ENCODE measurements at regions of chr11 and their contacts with region 1.

Region 1: GRCh38 chr11:75513250-75513649 is 12.5 kb downstream of the GDPD5 start:
- DNase-seq: no peak
- H3K4me3 ChIP-seq: no peak overlapping the region
- H3K27ac ChIP-seq: no peak overlapping the region
- H3K4me1 ChIP-seq: peaks cover 0 to 13% (median 0%) of the 10 kb centered on the region in 4 donors
- H3K27me3 ChIP-seq: no peaks in the 10 kb centered on the region
- CTCF ChIP-seq: no peak
- EP300 ChIP-seq: no peak
- POLR2A ChIP-seq: no peak

Region 2: GRCh38 chr11:75468534-75469340 is 44.5 kb before region 1 on chr11:
- intact Hi-C with region 1: loop called (anchors 5 kb)
- DNase-seq: peak; percentile 87
- H3K4me3 ChIP-seq: no peak overlapping the region
- H3K27ac ChIP-seq: peak overlapping the region in 2 of 4 donors; percentile 14
- H3K4me1 ChIP-seq: no peaks in the 10 kb centered on the region
- H3K27me3 ChIP-seq: no peaks in the 10 kb centered on the region
- CTCF ChIP-seq: no peak
- EP300 ChIP-seq: no peak
- POLR2A ChIP-seq: no peak